Caco-2 (cell line): ENCODE measurements at regions of chr11 and their contacts with region 1.

Region 1: DNA sequence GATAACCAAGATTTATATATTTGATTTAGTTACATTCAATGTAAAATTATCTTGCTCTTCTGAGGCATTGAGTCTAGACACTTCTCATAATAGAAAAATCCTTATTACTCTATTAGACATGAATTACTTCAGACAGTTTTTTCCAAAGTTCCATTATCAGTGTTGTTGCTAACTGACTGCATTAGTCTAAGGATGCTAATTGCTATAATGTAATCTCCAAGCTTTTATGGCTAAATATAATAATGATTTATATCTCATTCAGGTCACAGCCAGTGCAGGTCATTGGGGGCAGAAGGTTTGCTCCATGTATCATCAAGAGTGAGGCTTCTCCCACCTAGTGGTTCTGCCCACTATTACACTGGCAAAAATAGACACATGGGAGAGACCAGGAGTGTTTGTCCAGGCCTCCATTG is 377.2 kb upstream of the DDI1 start:
- DNase-seq: peak; percentile 53 to 57
- H3K4me3 ChIP-seq: no peak overlapping the region
- H3K4me3 Mint-ChIP-seq: no peak overlapping the region
- H3K27ac Mint-ChIP-seq: no peak overlapping the region
- H3K4me1 ChIP-seq: no peaks in the 10 kb centered on the region
- H3K4me1 Mint-ChIP-seq: no peaks in the 10 kb centered on the region
- H3K27me3 ChIP-seq: no peaks in the 10 kb centered on the region
- H3K27me3 Mint-ChIP-seq: no peaks in the 10 kb centered on the region
- CTCF ChIP-seq: peak; percentile 72 to 76

Region 2: GRCh38 chr11:103257360-103257759 is 401.9 kb before region 1 on chr11:
- CTCF ChIA-PET with region 1: no interaction called
- POLR2A ChIA-PET with region 1: no interaction called
- intact Hi-C with region 1: loop called (anchors 1 kb)
- DNase-seq: peak in 1 of 2 experiments; percentile 58
- H3K4me3 ChIP-seq: no peak overlapping the region
- H3K4me3 Mint-ChIP-seq: no peak overlapping the region
- H3K27ac Mint-ChIP-seq: no peak overlapping the region
- H3K4me1 ChIP-seq: no peaks in the 10 kb centered on the region
- H3K4me1 Mint-ChIP-seq: no peaks in the 10 kb centered on the region
- H3K27me3 ChIP-seq: no peaks in the 10 kb centered on the region
- H3K27me3 Mint-ChIP-seq: no peaks in the 10 kb centered on the region
- CTCF ChIP-seq: peak; percentile 76 to 77

Region 3: GRCh38 chr11:103338621-103339484 is 320.4 kb before region 1 on chr11:
- CTCF ChIA-PET with region 1: no interaction called
- POLR2A ChIA-PET with region 1: no interaction called
- intact Hi-C with region 1: loop called (anchors 1 kb)
- DNase-seq: peak; percentile 69 to 79
- H3K4me3 ChIP-seq: no peak overlapping the region
- H3K4me3 Mint-ChIP-seq: no peak overlapping the region
- H3K27ac Mint-ChIP-seq: no peak overlapping the region
- H3K4me1 ChIP-seq: no peaks in the 10 kb centered on the region
- H3K4me1 Mint-ChIP-seq: no peaks in the 10 kb centered on the region
- H3K27me3 ChIP-seq: no peaks in the 10 kb centered on the region
- H3K27me3 Mint-ChIP-seq: no peaks in the 10 kb centered on the region
- CTCF ChIP-seq: peak; percentile 53 to 84

Region 4: DNA sequence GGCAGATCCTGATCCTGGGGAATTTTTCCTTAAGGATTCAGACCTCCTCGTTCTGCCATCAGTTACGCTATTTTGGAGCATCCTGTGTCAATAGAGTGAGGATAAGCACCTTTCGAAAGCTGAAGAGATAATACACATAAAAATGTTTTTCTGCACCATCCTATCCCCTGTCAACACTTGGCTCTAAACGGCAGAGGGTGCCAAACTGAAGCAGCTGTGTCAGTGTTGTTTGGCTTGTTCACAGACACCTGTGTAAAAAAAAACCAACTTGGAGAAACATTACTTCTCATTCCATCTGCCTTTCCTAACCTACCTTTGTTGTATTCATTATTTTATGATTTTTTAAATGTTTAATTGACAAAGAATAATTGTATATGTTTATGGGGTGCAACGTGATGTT is 39.7 kb before region 1 on chr11:
- CTCF ChIA-PET with region 1: no interaction called
- POLR2A ChIA-PET with region 1: no interaction called
- intact Hi-C with region 1: loop called (anchors 1 kb)
- DNase-seq: peak; percentile 45 to 51
- H3K4me3 ChIP-seq: no peak overlapping the region
- H3K4me3 Mint-ChIP-seq: no peak overlapping the region
- H3K27ac Mint-ChIP-seq: no peak overlapping the region
- H3K4me1 ChIP-seq: no peaks in the 10 kb centered on the region
- H3K4me1 Mint-ChIP-seq: no peaks in the 10 kb centered on the region
- H3K27me3 ChIP-seq: no peaks in the 10 kb centered on the region
- H3K27me3 Mint-ChIP-seq: peaks cover 4% of the 10 kb centered on the region
- CTCF ChIP-seq: peak; percentile 38 to 58